Spleen (tissue), 13 donors: ENCODE measurements at regions of chr12 and their contacts with region 1.

Region 1: DNA sequence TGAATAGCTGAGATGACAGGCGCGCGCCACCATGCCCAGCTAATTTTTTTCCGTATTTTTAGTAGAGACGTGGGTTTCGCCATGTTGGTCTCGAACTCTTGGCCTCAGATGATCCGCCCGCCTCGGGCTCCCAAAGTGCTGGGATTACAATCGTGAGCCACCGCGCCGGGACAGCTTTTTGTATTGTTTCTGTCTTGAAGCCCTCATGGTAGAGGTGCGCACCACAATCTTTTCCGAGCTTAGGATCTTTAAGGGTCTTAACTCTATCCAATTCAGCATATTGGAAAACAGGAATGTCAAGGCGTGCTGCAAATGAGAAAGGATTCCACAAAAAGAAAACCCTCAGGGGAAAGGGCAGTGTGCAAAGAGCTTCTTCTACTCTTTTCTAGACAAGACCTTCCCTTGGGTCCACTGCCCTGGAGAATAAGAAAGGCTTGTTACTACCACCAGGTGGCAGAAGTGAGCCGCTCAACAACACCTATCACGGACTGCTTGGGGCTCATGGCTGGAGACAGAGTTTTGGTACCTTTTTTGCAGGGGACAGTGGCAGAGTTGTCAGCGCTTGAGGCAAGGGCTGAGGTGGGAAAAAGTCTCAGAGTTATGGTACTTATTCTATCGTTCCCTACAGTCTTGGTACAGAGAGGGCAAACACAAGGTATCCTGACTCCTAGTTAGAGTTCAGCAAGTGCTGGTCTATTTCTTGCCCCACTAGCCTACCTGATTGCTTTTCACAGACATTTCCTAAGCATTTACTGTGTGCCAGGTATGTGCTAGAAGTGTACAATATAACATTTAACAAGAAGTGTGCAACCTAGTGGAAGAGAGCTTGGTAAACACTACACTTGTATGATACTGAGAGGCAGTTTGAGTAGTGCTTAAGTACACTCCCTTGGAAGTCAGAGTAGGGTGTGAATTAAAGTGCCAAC is 16.4 kb upstream of the SP7 start:
- DNase-seq: peak; percentile 89
- H3K4me3 ChIP-seq: no peak overlapping the region
- H3K27ac ChIP-seq: peak overlapping the region in 2 of 8 donors; percentile 11 to 53
- H3K4me1 ChIP-seq: peaks cover 4 to 11% (median 9%) of the 10 kb centered on the region in 6 donors
- H3K27me3 ChIP-seq: no peaks in the 10 kb centered on the region
- CTCF ChIP-seq: peak; percentile 81 to 96 (median 93)
- POLR2A ChIP-seq: no peak

Region 2: GRCh38 chr12:53151039-53151438 is 201.6 kb before region 1 on chr12:
- intact Hi-C with region 1: no loop called
- DNase-seq: no peak
- H3K4me3 ChIP-seq: no peak overlapping the region
- H3K27ac ChIP-seq: no peak overlapping the region
- H3K4me1 ChIP-seq: no peaks in the 10 kb centered on the region
- H3K27me3 ChIP-seq: no peaks in the 10 kb centered on the region
- CTCF ChIP-seq: no peak
- POLR2A ChIP-seq: no peak

Region 3: GRCh38 chr12:53414756-53415417 is 62.3 kb after region 1 on chr12:
- intact Hi-C with region 1: loop called (anchors 5 kb)
- DNase-seq: peak; percentile 2
- H3K4me3 ChIP-seq: no peak overlapping the region
- H3K27ac ChIP-seq: peak overlapping the region in 7 of 8 donors; percentile 14 to 70 (median 28)
- H3K4me1 ChIP-seq: peaks cover 22 to 80% (median 50%) of the 10 kb centered on the region in 6 donors
- H3K27me3 ChIP-seq: no peaks in the 10 kb centered on the region
- CTCF ChIP-seq: no peak
- POLR2A ChIP-seq: no peak

Region 4: GRCh38 chr12:53508534-53509199 is 156.1 kb after region 1 on chr12:
- intact Hi-C with region 1: loop called (anchors 5 kb)
- DNase-seq: peak; percentile 94
- H3K4me3 ChIP-seq: no peak overlapping the region
- H3K27ac ChIP-seq: peak overlapping the region in 7 of 8 donors; percentile 29 to 74 (median 67)
- H3K4me1 ChIP-seq: peaks cover 6 to 19% (median 12%) of the 10 kb centered on the region in 6 donors
- H3K27me3 ChIP-seq: no peaks in the 10 kb centered on the region
- CTCF ChIP-seq: peak; percentile 83 to 96 (median 92)
- POLR2A ChIP-seq: no peak